ENCODE measurements at regions of chr5 and their contacts with region 1.

Region 1: DNA sequence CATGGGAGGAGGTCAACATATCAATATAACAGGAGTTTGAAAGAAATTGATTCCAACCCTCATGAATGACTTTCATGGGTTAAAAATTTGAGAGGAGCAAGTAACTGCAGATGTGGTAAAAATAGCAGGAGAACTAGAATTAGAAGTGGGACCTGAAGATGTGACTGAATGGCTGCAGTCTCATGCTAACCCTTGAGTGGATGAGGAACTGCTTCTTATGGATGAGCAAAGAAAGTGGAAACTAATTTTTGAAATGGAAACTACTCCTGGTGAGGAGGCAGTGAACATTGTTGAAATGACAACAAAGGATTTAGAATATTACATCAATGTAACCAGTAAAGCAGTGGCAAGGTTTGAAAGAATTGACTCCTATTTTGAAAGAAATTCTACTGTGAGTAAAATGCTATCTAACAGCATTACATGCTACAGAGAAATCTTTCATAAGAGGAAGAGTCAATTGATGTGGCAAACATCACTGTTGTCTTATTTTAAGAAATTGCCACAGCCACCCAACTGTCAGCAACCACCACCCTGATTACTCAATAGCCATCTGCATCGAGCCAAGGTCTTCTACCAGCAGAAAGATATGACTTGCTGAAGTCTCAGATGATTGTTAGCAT is 1683.2 kb downstream of the MAT2B start:
- DNase-seq: peak; percentile 77 to 88 (median 81)
- H3K4me3 ChIP-seq: peak overlapping the region in 2 of 3 experiments; percentile 5 to 57
- H3K4me3 Mint-ChIP-seq: peak overlapping the region; percentile 28 to 36
- H3K27ac ChIP-seq: peak overlapping the region in 1 of 2 donors; percentile 86
- H3K27ac Mint-ChIP-seq: peak overlapping the region; percentile 82 to 97 (median 95)
- H3K4me1 ChIP-seq: peaks cover 44 to 56% of the 10 kb centered on the region in 2 donors
- H3K4me1 Mint-ChIP-seq: peaks cover 44% of the 10 kb centered on the region
- H3K27me3 ChIP-seq: no peaks in the 10 kb centered on the region
- H3K27me3 Mint-ChIP-seq: no peaks in the 10 kb centered on the region
- CTCF ChIP-seq: no peak

Region 2: DNA sequence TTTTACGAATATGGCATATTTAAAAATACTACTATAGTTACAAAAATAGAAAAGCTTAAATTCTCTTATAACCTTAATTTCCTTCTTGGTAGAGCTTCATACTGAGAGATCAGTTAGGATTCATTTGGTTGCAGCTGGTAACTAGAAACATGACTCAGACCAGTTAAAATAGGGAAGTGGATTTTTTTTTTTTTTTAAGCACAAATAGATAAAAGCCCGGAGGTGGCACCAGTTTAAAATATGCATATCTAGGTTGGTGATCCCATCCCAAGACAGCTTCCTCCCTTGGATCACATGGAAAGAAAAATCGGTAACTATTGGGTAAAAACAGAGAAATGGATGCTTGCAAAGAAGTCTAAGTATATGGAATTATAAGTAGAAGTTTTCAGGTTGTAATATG is 48.9 kb before region 1 on chr5:
- intact Hi-C with region 1: loop called in 1 of 2 experiments (anchors 10 kb)
- DNase-seq: peak; percentile 51 to 75 (median 71)
- H3K4me3 ChIP-seq: peak overlapping the region in 1 of 3 experiments; percentile 32
- H3K4me3 Mint-ChIP-seq: no peak overlapping the region
- H3K27ac ChIP-seq: peak overlapping the region in 1 of 2 donors; percentile 69
- H3K27ac Mint-ChIP-seq: peak overlapping the region; percentile 42 to 86 (median 62)
- H3K4me1 ChIP-seq: peaks cover 8 to 18% of the 10 kb centered on the region in 2 donors
- H3K4me1 Mint-ChIP-seq: peaks cover 13% of the 10 kb centered on the region
- H3K27me3 ChIP-seq: no peaks in the 10 kb centered on the region
- H3K27me3 Mint-ChIP-seq: no peaks in the 10 kb centered on the region
- CTCF ChIP-seq: no peak

Region 3: GRCh38 chr5:165242646-165243045 is 54.0 kb after region 1 on chr5:
- intact Hi-C with region 1: no loop called
- DNase-seq: no peak
- H3K4me3 ChIP-seq: no peak overlapping the region
- H3K4me3 Mint-ChIP-seq: no peak overlapping the region
- H3K27ac ChIP-seq: no peak overlapping the region
- H3K27ac Mint-ChIP-seq: no peak overlapping the region
- H3K4me1 ChIP-seq: no peaks in the 10 kb centered on the region
- H3K4me1 Mint-ChIP-seq: no peaks in the 10 kb centered on the region
- H3K27me3 ChIP-seq: no peaks in the 10 kb centered on the region
- H3K27me3 Mint-ChIP-seq: no peaks in the 10 kb centered on the region
- CTCF ChIP-seq: no peak

Measured in CD14-positive monocyte (primary cell).